SK-N-SH (cell line): ENCODE measurements at regions of chr19 and their contacts with region 1.

Region 1: GRCh38 chr19:39846176-39846677 is at the start of gene FBL:
- DNase-seq: peak; percentile 98
- H3K4me3 ChIP-seq: peak within 1 kb of the TSS; percentile 62 to 80
- H3K27ac ChIP-seq: peak within 1 kb of the TSS; percentile 55 to 89; a peak in 3 of 4 replicates
- H3K4me1 ChIP-seq: peaks cover 8 to 25% of the 10 kb centered on the region in 2 experiments; a peak in 2 of 4 replicates
- H3K27me3 ChIP-seq: no peaks in the 10 kb centered on the region
- CTCF ChIP-seq: no peak
- EP300 ChIP-seq: no peak
- RAD21 ChIP-seq: no peak
- polyA plus RNA-seq, gene FBL: 340 and 371 TPM in 2 replicates

Region 2: DNA sequence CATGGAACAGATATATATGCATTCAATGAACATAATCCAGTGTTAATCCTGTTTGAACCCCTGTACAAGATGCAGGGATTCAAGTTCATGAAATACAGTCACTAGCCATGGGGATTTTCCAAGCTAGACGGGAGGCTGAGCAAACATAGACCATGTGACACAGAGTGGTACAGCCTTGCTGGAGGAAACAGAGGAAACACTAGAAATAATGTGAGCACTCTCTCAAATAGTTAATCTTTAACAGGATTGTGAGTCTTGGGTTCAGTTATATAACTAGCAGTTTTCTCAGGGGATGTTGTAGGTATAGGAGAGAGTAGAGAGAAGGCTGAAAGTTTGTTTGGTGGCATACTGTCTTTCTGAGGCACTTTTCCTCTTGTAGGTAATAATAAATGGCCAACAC is 204.5 kb before region 1 on chr19:
- CTCF ChIA-PET with region 1: no interaction called
- POLR2A ChIA-PET with region 1: no interaction called
- DNase-seq: no peak
- H3K4me3 ChIP-seq: no peak overlapping the region
- H3K27ac ChIP-seq: no peak overlapping the region
- H3K4me1 ChIP-seq: no peaks in the 10 kb centered on the region
- H3K27me3 ChIP-seq: no peaks in the 10 kb centered on the region; the same call in 1 of the 2 replicates
- CTCF ChIP-seq: no peak
- EP300 ChIP-seq: no peak
- RAD21 ChIP-seq: no peak

Region 3: DNA sequence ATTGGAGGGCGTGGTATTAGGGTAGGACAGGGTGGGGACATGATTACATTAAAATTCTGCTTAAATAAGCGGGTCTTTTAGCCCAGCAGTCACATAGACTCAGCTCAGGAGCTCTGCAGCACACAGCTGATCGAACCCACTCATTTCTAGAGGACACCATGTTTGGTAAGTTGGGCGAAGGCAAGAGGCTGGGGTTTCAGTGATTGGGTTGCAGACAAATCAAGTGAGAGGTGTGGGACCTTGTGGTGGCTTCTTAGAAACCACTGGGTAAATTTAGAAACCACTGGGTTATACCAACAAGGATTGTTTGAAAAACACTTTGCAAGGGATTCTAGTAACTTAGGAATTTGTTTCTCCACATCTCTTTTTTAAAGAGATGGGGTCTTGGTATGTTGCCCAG is 67.5 kb before region 1 on chr19 and contains the start of gene LEUTX:
- CTCF ChIA-PET with region 1: interaction called, 17 read pairs
- POLR2A ChIA-PET with region 1: no interaction called
- DNase-seq: no peak
- H3K4me3 ChIP-seq: no peak within 1 kb of the TSS
- H3K27ac ChIP-seq: no peak within 1 kb of the TSS
- H3K4me1 ChIP-seq: no peaks in the 10 kb centered on the region
- H3K27me3 ChIP-seq: peaks cover 36% of the 10 kb centered on the region; the same call in 1 of the 2 replicates
- CTCF ChIP-seq: no peak
- EP300 ChIP-seq: no peak
- RAD21 ChIP-seq: no peak
- polyA plus RNA-seq, gene LEUTX: not detected in 2 replicates

Region 4: GRCh38 chr19:39802958-39803357 is 43.3 kb before region 1 on chr19:
- CTCF ChIA-PET with region 1: interaction called, 24 read pairs
- POLR2A ChIA-PET with region 1: no interaction called
- DNase-seq: no peak
- H3K4me3 ChIP-seq: no peak overlapping the region
- H3K27ac ChIP-seq: no peak overlapping the region
- H3K4me1 ChIP-seq: no peaks in the 10 kb centered on the region
- H3K27me3 ChIP-seq: peaks cover 11% of the 10 kb centered on the region
- CTCF ChIP-seq: no peak
- EP300 ChIP-seq: no peak
- RAD21 ChIP-seq: no peak

Region 5: GRCh38 chr19:39833464-39834286 is 12.6 kb before region 1 on chr19 and contains the start of gene DYRK1B:
- CTCF ChIA-PET with region 1: interaction called, 26 read pairs
- POLR2A ChIA-PET with region 1: interaction called, 7 read pairs
- DNase-seq: peak; percentile 99
- H3K4me3 ChIP-seq: peak within 1 kb of the TSS; percentile 84 to 97
- H3K27ac ChIP-seq: peak within 1 kb of the TSS; percentile 94 to 98
- H3K4me1 ChIP-seq: peaks cover 0 to 16% of the 10 kb centered on the region in 2 experiments; a peak in 2 of 4 replicates
- H3K27me3 ChIP-seq: no peaks in the 10 kb centered on the region
- CTCF ChIP-seq: no peak
- EP300 ChIP-seq: peak; percentile 28 to 85; a peak in 2 of 4 replicates
- RAD21 ChIP-seq: no peak
- polyA plus RNA-seq, gene DYRK1B: 10.2 and 17.2 TPM in 2 replicates

Region 6: DNA sequence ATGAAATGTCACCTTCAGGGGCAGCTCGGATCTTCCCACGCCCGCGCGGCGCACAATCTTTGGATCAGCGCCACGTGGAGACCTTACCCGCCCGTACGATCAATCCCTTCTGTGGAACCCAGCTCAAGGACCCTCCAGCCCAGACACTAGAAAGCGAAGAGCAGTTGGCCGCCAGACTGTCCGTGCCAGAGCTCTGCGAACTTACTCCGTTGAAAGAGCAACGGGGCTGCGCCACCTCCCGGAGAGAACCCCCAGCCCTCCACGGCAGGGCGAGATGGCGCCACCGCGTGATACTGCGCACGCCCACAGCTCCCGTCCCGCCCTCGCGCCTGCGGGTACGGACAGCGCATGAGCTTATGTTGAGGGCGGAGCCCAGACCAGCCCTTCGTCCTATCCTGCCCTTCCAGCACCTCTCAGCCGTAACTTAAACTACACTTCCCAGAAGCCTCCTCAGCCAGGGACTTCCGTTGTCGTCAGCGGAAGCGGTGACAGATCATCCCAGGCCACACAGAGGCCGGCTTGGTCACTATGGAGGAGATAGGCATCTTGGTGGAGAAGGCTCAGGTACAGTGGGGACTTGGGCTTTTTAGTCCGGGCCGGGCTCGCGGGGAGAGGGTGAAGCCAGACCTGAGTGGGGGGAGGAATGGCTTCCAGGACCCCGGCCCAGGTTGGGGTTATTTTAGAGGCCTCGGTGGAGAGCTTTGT is 124.6 kb after region 1 on chr19 and contains the start of gene PSMC4:
- CTCF ChIA-PET with region 1: interaction called, 13 read pairs
- POLR2A ChIA-PET with region 1: interaction called, 6 read pairs
- DNase-seq: peak; percentile 96
- H3K4me3 ChIP-seq: peak within 1 kb of the TSS; percentile 71 to 98
- H3K27ac ChIP-seq: peak within 1 kb of the TSS; percentile 70 to 82
- H3K4me1 ChIP-seq: peaks cover 11 to 12% of the 10 kb centered on the region in 2 experiments; a peak in 2 of 4 replicates
- H3K27me3 ChIP-seq: no peaks in the 10 kb centered on the region
- CTCF ChIP-seq: peak; percentile 75
- EP300 ChIP-seq: no peak
- RAD21 ChIP-seq: peak; percentile 73
- polyA plus RNA-seq, gene PSMC4: 172 and 173 TPM in 2 replicates